Right cardiac atrium (tissue), 5 donors: ENCODE measurements at regions of chr22 and their contacts with region 1.

Region 1: GRCh38 chr22:41403532-41404318 is 22.0 kb downstream of the TEF start:
- DNase-seq: peak; percentile 91 to 96 (median 94)
- ATAC-seq: peak; percentile 92 to 93
- H3K4me3 ChIP-seq: no peak overlapping the region
- H3K27ac ChIP-seq: peak overlapping the region; percentile 46
- H3K4me1 ChIP-seq: no peaks in the 10 kb centered on the region
- H3K27me3 ChIP-seq: no peaks in the 10 kb centered on the region

Region 2: GRCh38 chr22:41290262-41291221 is 113.2 kb before region 1 on chr22:
- intact Hi-C with region 1: no loop called
- DNase-seq: no peak
- ATAC-seq: no peak
- H3K4me3 ChIP-seq: no peak overlapping the region
- H3K27ac ChIP-seq: no peak overlapping the region
- H3K4me1 ChIP-seq: no peaks in the 10 kb centered on the region
- H3K27me3 ChIP-seq: no peaks in the 10 kb centered on the region

Region 3: DNA sequence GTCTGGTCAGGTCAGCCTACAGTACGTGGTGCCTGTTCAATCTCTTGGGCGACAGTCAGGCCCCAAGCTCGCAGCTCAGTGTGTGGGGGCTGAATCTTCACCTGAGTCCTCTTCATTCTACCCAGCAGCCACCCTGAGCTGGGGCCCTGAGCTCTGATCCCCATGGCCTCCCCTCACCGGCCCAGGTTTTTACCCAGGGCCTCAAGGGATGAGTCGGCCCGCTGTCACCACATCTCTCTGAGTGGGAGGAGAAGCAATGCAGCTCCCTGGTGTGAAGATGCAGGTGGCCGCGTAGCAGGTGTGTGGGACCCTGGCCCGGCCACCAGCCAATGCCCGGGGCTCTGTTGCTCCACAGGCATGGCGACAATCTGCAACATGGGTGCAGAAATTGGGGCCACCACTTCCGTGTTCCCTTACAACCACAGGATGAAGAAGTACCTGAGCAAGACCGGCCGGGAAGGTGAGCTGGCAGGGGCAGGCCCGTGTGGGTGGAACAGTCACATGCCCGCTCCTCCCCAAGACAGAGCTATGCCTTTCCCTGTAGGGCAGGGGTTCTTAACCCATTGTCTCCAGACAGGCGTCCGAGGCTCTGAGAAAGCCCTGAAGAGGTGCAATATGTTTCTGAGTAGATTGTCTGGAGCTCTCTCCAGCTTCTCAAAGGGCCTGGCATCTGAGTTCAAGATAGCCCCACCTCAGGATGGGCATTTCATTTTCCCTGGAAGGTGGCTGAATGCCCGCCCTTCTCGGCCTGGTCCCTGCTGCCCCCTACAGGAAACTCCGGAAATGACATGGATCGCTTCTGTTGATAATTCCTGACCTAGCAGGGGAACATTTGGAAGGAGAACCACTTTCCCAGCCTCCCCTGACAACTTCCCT is 113.7 kb after region 1 on chr22:
- intact Hi-C with region 1: loop called in 3 of 4 experiments (anchors 5 kb)
- DNase-seq: peak; percentile 66 to 86 (median 73)
- ATAC-seq: peak; percentile 22 to 44
- H3K4me3 ChIP-seq: no peak overlapping the region
- H3K27ac ChIP-seq: no peak overlapping the region
- H3K4me1 ChIP-seq: peaks cover 8% of the 10 kb centered on the region
- H3K27me3 ChIP-seq: no peaks in the 10 kb centered on the region

Region 4: DNA sequence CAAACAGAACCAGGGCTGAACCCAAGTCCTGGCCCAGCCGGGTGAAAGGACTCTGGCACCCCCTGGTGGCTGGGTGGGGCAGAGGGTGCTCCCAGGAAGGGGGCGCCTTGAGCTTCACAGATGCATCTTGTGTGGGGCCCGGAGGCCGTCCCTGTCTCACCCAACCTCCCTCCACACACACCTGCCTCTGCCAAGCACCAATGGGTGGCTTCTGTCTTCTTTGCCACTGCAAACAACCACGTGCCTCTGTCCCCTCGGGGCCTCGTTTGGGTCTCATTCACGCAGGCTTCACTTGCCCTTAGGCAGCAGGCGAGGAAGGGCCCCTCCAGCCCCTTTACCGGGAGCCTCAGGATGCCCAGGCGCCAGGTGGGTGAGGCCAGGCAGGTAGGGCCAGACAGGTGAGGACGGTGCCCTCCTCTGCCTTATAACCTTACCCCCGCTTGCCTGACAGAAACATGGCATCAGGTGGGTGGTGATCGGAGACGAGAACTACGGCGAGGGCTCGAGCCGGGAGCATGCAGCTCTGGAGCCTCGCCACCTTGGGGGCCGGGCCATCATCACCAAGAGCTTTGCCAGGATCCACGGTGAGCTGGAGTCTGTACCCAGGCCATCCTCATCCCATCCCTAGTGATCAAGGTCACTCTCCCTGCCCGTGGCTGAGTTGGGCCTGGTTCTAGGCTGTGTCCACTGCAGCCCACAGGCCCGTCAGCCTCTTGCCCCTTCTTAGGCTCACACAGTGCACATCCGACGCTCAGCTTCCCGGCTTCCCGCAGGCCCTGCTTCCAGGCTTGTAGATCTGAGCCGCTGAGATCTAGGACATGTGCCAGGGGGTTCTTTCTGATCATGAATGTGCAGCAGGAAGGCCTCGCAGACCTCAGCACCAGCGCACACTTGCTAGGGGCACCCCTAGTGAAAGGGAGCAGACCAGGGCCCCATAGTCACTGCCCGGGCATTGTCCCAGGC is 123.4 kb after region 1 on chr22:
- intact Hi-C with region 1: loop called in 2 of 4 experiments (anchors 5 kb)
- DNase-seq: peak in 2 of 3 donors; percentile 81 to 83
- ATAC-seq: peak; percentile 4
- H3K4me3 ChIP-seq: no peak overlapping the region
- H3K27ac ChIP-seq: peak overlapping the region; percentile 59
- H3K4me1 ChIP-seq: peaks cover 14% of the 10 kb centered on the region
- H3K27me3 ChIP-seq: no peaks in the 10 kb centered on the region

Region 5: DNA sequence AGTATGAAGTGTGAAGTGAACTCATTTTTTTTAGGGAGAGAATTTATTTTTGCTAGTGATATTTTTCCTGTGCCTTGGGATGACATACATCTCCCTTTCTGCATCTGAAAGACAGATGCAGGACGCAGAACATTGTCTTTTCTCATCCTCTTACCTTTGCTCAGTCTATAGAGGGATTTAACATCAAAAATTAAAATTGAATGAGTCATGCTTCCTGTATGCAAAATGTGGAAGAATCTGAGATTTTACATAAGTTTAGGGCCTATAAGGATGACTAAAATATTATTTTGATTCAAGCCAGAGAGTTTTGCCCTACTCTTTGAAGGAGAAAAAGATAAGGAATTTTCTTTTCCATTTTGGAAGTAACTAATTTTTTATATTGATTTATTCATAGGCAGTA is 244.7 kb after region 1 on chr22:
- intact Hi-C with region 1: no loop called
- DNase-seq: no peak
- ATAC-seq: no peak
- H3K4me3 ChIP-seq: no peak overlapping the region
- H3K27ac ChIP-seq: no peak overlapping the region
- H3K4me1 ChIP-seq: no peaks in the 10 kb centered on the region
- H3K27me3 ChIP-seq: no peaks in the 10 kb centered on the region